Heart left ventricle (tissue), 16 donors: ENCODE measurements at regions of chr1 and their contacts with region 1.

Region 1: DNA sequence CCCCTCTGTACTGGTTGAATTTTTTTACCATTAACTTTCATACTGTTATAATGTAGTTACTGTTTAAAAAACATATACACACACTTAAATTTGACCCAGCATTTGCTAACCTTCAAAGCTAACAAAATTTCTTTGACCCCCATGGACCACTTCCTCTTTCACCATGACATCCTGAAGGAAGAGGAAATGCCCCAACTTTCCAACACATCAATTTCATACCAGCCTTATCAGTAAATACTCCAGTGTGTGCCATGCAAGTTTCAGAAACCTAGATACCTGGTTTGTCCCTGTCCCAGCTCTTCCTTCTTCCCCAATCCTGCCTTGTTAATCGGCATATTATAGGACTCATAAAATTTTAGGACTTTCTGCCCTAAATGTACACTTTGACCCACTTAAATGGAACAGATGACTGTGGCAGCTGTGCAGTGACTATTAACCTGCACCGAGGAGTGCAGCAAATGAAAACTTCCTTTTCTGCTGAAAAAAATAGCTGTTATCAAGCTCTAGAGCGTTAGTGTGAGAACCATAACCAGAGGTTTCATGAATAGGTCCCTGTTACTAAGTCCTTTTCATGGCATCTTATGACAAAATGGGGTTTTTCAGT is 54.1 kb downstream of the DTL start:
- DNase-seq: no peak
- ATAC-seq: no peak
- H3K4me3 ChIP-seq: no peak overlapping the region
- H3K27ac ChIP-seq: peak overlapping the region in 5 of 12 donors; percentile 11 to 78 (median 21)
- H3K4me1 ChIP-seq: peaks cover 0 to 34% (median 10%) of the 10 kb centered on the region in 12 donors
- H3K27me3 ChIP-seq: no peaks in the 10 kb centered on the region
- CTCF ChIP-seq: no peak
- POLR2A ChIP-seq: no peak

Region 2: GRCh38 chr1:212021563-212021962 is 68.1 kb before region 1 on chr1:
- intact Hi-C with region 1: no loop called
- DNase-seq: no peak
- ATAC-seq: no peak
- H3K4me3 ChIP-seq: no peak overlapping the region
- H3K27ac ChIP-seq: no peak overlapping the region
- H3K4me1 ChIP-seq: no peaks in the 10 kb centered on the region
- H3K27me3 ChIP-seq: no peaks in the 10 kb centered on the region
- CTCF ChIP-seq: no peak
- POLR2A ChIP-seq: no peak

Region 3: GRCh38 chr1:212119397-212119837 is 29.8 kb after region 1 on chr1:
- intact Hi-C with region 1: loop called in 1 of 10 experiments (anchors 1 kb)
- DNase-seq: peak; percentile 59 to 83 (median 74)
- ATAC-seq: peak; percentile 81 to 98 (median 98)
- H3K4me3 ChIP-seq: no peak overlapping the region
- H3K27ac ChIP-seq: peak overlapping the region; percentile 25 to 87 (median 76)
- H3K4me1 ChIP-seq: peaks cover 0 to 21% (median 10%) of the 10 kb centered on the region in 12 donors
- H3K27me3 ChIP-seq: no peaks in the 10 kb centered on the region
- CTCF ChIP-seq: no peak
- POLR2A ChIP-seq: no peak

Region 4: DNA sequence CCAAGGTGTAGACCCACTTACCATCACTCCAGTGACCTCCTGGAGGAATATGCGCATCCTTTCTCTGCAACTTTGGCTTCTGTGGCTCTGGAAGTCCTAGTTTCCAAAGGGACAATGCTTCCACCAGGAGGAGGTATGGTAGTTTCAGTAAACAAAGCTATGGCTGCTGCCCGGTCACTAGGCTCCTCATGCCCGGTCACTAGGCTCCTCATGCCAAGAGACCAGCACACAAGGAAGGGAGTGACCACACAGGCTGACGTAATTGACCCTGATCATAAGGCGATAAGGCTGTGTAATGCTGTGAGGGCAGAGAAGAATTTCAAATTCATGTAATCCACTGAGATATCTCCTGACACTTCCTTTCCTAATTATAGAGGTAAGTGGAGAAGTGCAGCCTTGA is 48.8 kb after region 1 on chr1:
- intact Hi-C with region 1: no loop called
- DNase-seq: peak in 3 of 5 donors; percentile 15 to 47 (median 28)
- ATAC-seq: peak in 3 of 4 donors; percentile 60 to 77 (median 69)
- H3K4me3 ChIP-seq: no peak overlapping the region
- H3K27ac ChIP-seq: no peak overlapping the region
- H3K4me1 ChIP-seq: no peaks in the 10 kb centered on the region
- H3K27me3 ChIP-seq: no peaks in the 10 kb centered on the region
- CTCF ChIP-seq: peak in 7 of 12 donors; percentile 14 to 45 (median 31)
- POLR2A ChIP-seq: no peak

Region 5: GRCh38 chr1:212234431-212235395 is 145.1 kb after region 1 on chr1:
- intact Hi-C with region 1: loop called in 2 of 10 experiments (anchors 5 to 10 kb)
- DNase-seq: peak in 4 of 5 donors; percentile 59 to 82 (median 64)
- ATAC-seq: peak; percentile 96 to 98 (median 98)
- H3K4me3 ChIP-seq: no peak overlapping the region
- H3K27ac ChIP-seq: peak overlapping the region in 11 of 12 donors; percentile 53 to 88 (median 80)
- H3K4me1 ChIP-seq: peaks cover 3 to 57% (median 29%) of the 10 kb centered on the region in 12 donors
- H3K27me3 ChIP-seq: no peaks in the 10 kb centered on the region
- CTCF ChIP-seq: no peak
- POLR2A ChIP-seq: no peak